ENCODE measurements at regions of chr20 and their contacts with region 1.

Region 1: DNA sequence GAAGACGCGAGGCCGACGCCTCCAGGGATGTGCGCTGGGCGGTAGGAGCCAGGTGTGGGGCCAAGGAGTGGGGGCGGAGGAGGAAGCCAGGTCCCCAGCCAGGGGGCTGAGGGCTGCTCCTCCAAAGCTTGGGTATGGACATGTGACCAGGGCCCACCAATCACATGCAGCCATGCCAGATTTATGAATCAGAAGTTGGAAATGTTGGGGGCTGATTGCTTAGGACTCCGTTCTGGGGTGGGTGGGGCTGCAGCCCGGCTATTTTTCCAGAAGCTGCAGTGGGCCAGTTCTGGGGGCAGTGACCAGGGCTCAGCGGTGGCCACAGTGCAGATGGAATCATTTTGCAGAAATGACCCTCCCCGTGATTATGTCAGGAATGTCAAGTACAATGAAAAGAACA is 96.0 kb downstream of the CEBPB start:
- DNase-seq: no peak
- ATAC-seq: peak; percentile 44; the same call in 1 of the 2 replicates
- H3K4me3 ChIP-seq: peak overlapping the region; percentile 5 to 30; a peak in 3 of 4 replicates
- H3K27ac ChIP-seq: no peak overlapping the region
- H3K4me1 ChIP-seq: peaks cover 37% of the 10 kb centered on the region
- H3K27me3 ChIP-seq: no peaks in the 10 kb centered on the region
- CTCF ChIP-seq: no peak

Region 2: DNA sequence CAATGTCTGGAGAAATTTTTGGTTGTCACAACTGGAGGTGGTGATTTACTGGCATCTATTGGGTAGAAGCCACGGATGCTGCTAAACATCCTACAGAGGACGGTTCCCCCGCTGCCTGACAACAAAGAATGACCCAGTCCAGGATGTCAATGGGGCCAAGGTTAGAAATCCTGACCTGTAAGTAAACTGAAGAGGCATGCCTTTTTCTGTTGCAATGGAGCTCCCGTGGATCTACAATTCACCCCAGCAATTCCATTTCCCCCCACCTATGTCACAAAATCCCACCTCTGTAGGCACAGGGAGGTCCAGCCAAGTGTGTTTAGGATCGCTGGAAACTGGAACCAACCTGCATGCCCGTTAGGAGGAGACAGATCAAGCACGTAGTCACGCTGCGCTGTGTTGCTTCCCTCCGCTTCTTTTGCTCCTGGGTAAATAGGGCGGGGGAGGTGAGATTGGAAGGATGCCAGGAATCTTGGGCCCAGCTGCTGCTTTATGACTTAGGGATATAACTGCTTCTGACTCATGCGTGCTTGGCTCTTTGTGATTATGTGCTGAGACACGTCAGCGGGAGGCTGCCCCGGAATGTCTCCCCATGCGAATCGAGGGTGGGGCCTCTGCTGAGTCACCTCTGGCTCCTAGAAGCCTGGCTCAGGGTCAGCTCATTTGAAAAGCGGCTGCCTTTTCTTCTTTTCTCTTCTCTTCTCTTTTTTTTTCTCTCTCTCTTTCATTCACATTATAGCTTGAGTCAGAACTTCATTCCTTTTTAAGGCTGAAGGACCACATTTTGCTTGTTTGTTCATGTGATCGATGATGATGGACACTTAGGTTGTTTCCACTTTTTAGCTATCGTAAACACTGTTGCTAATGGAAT is 120.7 kb before region 1 on chr20:
- CTCF ChIA-PET with region 1: no interaction called
- POLR2A ChIA-PET with region 1: no interaction called
- in situ Hi-C with region 1: no loop called
- intact Hi-C with region 1: no loop called
- DNase-seq: peak; percentile 99
- ATAC-seq: peak; percentile 95
- H3K4me3 ChIP-seq: peak overlapping the region; percentile 38 to 64
- H3K27ac ChIP-seq: peak overlapping the region; percentile 99
- H3K4me1 ChIP-seq: peaks cover 47% of the 10 kb centered on the region
- H3K27me3 ChIP-seq: no peaks in the 10 kb centered on the region
- CTCF ChIP-seq: no peak

Region 3: GRCh38 chr20:50320910-50321796 is 34.5 kb after region 1 on chr20:
- CTCF ChIA-PET with region 1: no interaction called
- POLR2A ChIA-PET with region 1: no interaction called
- in situ Hi-C with region 1: loop called (anchors 5 kb)
- intact Hi-C with region 1: no loop called
- DNase-seq: no peak
- ATAC-seq: peak; percentile 88
- H3K4me3 ChIP-seq: peak overlapping the region in 1 of 2 experiments; percentile 3; a peak in 1 of 4 replicates
- H3K27ac ChIP-seq: no peak overlapping the region; the same call in 1 of the 2 replicates
- H3K4me1 ChIP-seq: peaks cover 7% of the 10 kb centered on the region
- H3K27me3 ChIP-seq: no peaks in the 10 kb centered on the region
- CTCF ChIP-seq: no peak